GM12878 (cell line): ENCODE measurements at regions of chr5 and their contacts with region 1.

Region 1: DNA sequence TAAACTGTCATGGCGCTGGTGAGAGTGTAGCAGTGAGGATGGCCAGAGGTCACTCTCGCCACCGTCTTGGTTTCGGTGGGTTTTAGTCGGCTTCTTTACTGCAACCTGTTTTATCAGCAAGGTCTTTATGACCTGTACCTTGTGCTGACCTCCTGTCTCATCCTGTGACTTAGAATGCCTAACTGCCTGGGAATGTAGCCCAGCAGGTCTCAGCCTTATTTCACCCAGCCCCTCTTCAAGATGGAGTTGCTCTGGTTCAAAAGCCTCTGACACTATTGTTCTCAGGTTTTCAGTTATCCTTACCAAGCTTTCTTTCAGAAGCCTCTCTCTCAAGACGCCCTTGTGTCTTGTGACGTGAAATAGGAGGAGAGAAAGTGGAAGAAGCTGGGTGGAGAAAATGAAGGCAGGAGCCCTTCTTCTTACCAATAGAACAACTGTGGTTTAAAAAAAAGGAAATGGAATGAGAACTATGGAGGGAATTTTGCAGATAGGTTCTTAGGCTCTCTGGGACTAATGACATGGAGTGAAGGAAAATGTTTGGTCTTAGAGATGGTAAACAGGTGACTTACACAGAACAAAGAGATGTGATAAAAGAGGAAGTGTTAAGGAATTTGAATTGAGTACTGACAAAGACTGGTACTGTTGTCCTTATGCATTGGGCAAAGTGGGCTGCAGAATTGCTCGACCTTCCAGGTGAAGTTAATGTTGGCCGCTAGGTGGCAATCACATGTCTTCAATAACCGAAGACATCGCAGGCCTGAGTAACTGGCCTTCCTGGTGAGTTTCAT is 133.3 kb upstream of the RAI14 start:
- DNase-seq: no peak
- ATAC-seq: peak; percentile 98
- H3K4me3 ChIP-seq: no peak overlapping the region
- H3K27ac ChIP-seq: no peak overlapping the region
- H3K4me1 ChIP-seq: no peaks in the 10 kb centered on the region
- H3K27me3 ChIP-seq: no peaks in the 10 kb centered on the region
- CTCF ChIP-seq: peak; percentile 65 to 78 (median 72); a peak in 5 of 6 replicates
- EP300 ChIP-seq: no peak
- POLR2A ChIP-seq: no peak
- RAD21 ChIP-seq: peak; percentile 87

Region 2: DNA sequence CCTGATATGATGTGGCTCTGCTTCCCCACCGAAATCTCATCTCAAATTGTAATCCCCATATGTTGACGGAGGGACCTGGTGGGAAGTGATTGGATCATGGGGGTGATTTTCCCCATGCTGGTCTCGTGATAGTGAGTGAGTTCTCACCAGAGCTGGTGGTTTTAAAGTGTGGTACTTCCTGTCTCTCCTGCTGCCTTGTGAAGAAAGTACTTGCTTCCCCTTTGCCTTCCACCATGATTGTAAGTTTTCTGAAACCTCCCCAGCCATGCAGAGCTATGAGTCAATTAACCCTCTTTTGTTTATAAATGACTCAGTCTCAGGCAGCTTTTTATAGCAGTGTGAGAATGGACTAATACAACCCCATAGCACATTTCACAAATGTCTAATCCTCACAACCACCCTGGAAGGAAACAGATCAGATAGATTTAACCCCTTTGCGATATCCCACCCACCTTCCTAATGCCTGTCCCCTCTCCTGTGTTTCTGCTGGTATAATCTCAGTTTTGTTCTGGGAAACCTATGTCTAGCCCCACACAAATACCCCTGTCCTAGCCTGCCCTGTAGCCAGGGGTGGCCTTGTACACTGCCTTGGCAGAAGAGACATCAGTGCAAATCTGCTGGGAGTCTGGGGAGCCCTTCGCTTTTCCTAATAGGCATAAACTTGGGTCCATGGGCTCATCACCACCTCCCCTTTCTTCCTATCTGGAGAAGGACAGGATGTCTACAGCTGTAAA is 23.6 kb before region 1 on chr5:
- CTCF ChIA-PET with region 1: interaction called, 11 read pairs
- POLR2A ChIA-PET with region 1: no interaction called
- RAD21 ChIA-PET with region 1: no interaction called
- SMC1A ChIA-PET with region 1: no interaction called
- in situ Hi-C with region 1: no loop called
- intact Hi-C with region 1: no loop called
- DNase-seq: peak; percentile 81
- ATAC-seq: peak; percentile 95
- H3K4me3 ChIP-seq: no peak overlapping the region
- H3K27ac ChIP-seq: peak overlapping the region; percentile 91
- H3K4me1 ChIP-seq: peaks cover 58% of the 10 kb centered on the region
- H3K27me3 ChIP-seq: no peaks in the 10 kb centered on the region
- CTCF ChIP-seq: no peak
- EP300 ChIP-seq: peak; percentile 31 to 74; a peak in 2 of 4 replicates
- POLR2A ChIP-seq: no peak
- RAD21 ChIP-seq: no peak

Region 3: GRCh38 chr5:34533582-34534522 is 11.1 kb after region 1 on chr5:
- CTCF ChIA-PET with region 1: interaction called, 29 read pairs
- POLR2A ChIA-PET with region 1: no interaction called
- RAD21 ChIA-PET with region 1: interaction called, 3 read pairs
- SMC1A ChIA-PET with region 1: interaction called, 5 read pairs
- in situ Hi-C with region 1: no loop called
- intact Hi-C with region 1: no loop called
- DNase-seq: no peak
- ATAC-seq: peak; percentile 74
- H3K4me3 ChIP-seq: no peak overlapping the region
- H3K27ac ChIP-seq: peak overlapping the region; percentile 42
- H3K4me1 ChIP-seq: peaks cover 21% of the 10 kb centered on the region
- H3K27me3 ChIP-seq: no peaks in the 10 kb centered on the region; a peak in 1 of 4 replicates
- CTCF ChIP-seq: no peak
- EP300 ChIP-seq: no peak
- POLR2A ChIP-seq: no peak
- RAD21 ChIP-seq: no peak

Region 4: GRCh38 chr5:34550247-34550646 is 27.5 kb after region 1 on chr5:
- CTCF ChIA-PET with region 1: no interaction called
- POLR2A ChIA-PET with region 1: no interaction called
- RAD21 ChIA-PET with region 1: no interaction called
- SMC1A ChIA-PET with region 1: no interaction called
- in situ Hi-C with region 1: no loop called
- intact Hi-C with region 1: no loop called
- DNase-seq: no peak
- ATAC-seq: no peak
- H3K4me3 ChIP-seq: no peak overlapping the region
- H3K27ac ChIP-seq: no peak overlapping the region
- H3K4me1 ChIP-seq: no peaks in the 10 kb centered on the region
- H3K27me3 ChIP-seq: no peaks in the 10 kb centered on the region
- CTCF ChIP-seq: no peak
- EP300 ChIP-seq: no peak
- POLR2A ChIP-seq: no peak
- RAD21 ChIP-seq: no peak

Region 5: DNA sequence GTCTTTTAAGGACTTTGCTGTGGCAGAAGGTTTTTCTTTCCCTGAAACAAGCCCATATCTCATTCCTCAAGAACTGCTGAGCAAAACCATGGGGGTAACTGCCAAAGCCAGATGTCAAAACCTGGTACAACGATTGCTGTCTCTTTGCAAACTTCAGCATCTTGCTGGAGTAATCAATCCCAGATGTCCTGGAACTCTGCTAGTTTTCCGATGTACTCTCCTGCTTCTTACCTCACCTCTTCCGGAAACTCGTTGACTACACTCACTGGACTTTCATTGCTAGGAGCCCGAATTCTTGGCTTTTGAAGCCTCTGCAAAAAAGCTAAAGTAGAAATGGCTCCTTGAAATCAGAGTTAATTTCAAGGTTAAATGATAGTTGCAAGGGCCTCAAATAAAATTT is 369.2 kb after region 1 on chr5:
- CTCF ChIA-PET with region 1: interaction called, 15 read pairs
- POLR2A ChIA-PET with region 1: no interaction called
- RAD21 ChIA-PET with region 1: interaction called, 8 read pairs
- SMC1A ChIA-PET with region 1: interaction called, 10 read pairs
- in situ Hi-C with region 1: no loop called
- intact Hi-C with region 1: no loop called
- DNase-seq: no peak
- ATAC-seq: no peak
- H3K4me3 ChIP-seq: no peak overlapping the region
- H3K27ac ChIP-seq: no peak overlapping the region
- H3K4me1 ChIP-seq: no peaks in the 10 kb centered on the region
- H3K27me3 ChIP-seq: no peaks in the 10 kb centered on the region
- CTCF ChIP-seq: no peak
- EP300 ChIP-seq: no peak
- POLR2A ChIP-seq: no peak
- RAD21 ChIP-seq: no peak

Region 6: GRCh38 chr5:34898258-34898895 is 375.6 kb after region 1 on chr5:
- CTCF ChIA-PET with region 1: interaction called, 33 read pairs
- POLR2A ChIA-PET with region 1: no interaction called
- RAD21 ChIA-PET with region 1: interaction called, 8 read pairs
- SMC1A ChIA-PET with region 1: interaction called, 10 read pairs
- in situ Hi-C with region 1: no loop called
- intact Hi-C with region 1: loop called (anchors 1 kb)
- DNase-seq: no peak
- ATAC-seq: peak; percentile 94
- H3K4me3 ChIP-seq: no peak overlapping the region
- H3K27ac ChIP-seq: no peak overlapping the region
- H3K4me1 ChIP-seq: no peaks in the 10 kb centered on the region
- H3K27me3 ChIP-seq: no peaks in the 10 kb centered on the region
- CTCF ChIP-seq: peak; percentile 77 to 82 (median 79)
- EP300 ChIP-seq: no peak
- POLR2A ChIP-seq: no peak
- RAD21 ChIP-seq: peak; percentile 90

Region 7: DNA sequence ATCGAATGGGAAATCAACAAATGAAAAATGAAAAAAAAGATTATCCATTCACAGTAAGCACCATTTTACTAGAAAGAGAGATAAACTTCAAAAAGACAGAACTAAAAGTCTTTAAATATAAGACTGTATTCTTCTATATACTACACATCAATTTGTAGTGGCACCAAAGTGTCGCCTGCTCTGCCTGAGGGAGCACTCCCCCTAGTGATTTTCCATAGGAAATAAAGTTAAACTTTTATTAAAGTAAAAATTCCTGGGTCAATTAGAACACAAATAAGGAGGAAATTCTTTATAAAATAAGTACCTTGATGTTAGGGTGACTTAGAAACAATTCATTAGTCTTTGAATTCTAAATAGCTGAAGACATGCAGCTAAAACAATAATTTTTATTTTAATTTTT is 382.8 kb after region 1 on chr5:
- CTCF ChIA-PET with region 1: interaction called, 10 read pairs
- POLR2A ChIA-PET with region 1: no interaction called
- RAD21 ChIA-PET with region 1: interaction called, 3 read pairs
- SMC1A ChIA-PET with region 1: interaction called, 4 read pairs
- in situ Hi-C with region 1: no loop called
- intact Hi-C with region 1: no loop called
- DNase-seq: no peak
- ATAC-seq: no peak
- H3K4me3 ChIP-seq: no peak overlapping the region
- H3K27ac ChIP-seq: no peak overlapping the region
- H3K4me1 ChIP-seq: no peaks in the 10 kb centered on the region
- H3K27me3 ChIP-seq: no peaks in the 10 kb centered on the region
- CTCF ChIP-seq: no peak; a peak in 1 of 6 replicates
- EP300 ChIP-seq: no peak
- POLR2A ChIP-seq: no peak
- RAD21 ChIP-seq: no peak